ENCODE measurements at regions of chr10 and their contacts with region 1.

Region 1: GRCh38 chr10:90751107-90751997 is 106.5 kb downstream of the HTR7 start:
- DNase-seq: peak; percentile 76
- ATAC-seq: peak; percentile 99
- H3K4me3 Mint-ChIP-seq: no peak overlapping the region
- H3K27ac Mint-ChIP-seq: no peak overlapping the region
- H3K4me1 Mint-ChIP-seq: peaks cover 13% of the 10 kb centered on the region
- H3K27me3 Mint-ChIP-seq: no peaks in the 10 kb centered on the region
- CTCF ChIP-seq: peak; percentile 74

Region 2: GRCh38 chr10:90470966-90471365 is 280.4 kb before region 1 on chr10:
- CTCF ChIA-PET with region 1: no interaction called
- POLR2A ChIA-PET with region 1: no interaction called
- DNase-seq: no peak
- ATAC-seq: no peak; the same call in 1 of the 2 replicates
- H3K4me3 Mint-ChIP-seq: no peak overlapping the region
- H3K27ac Mint-ChIP-seq: peak overlapping the region; percentile 26
- H3K4me1 Mint-ChIP-seq: peaks cover 27% of the 10 kb centered on the region
- H3K27me3 Mint-ChIP-seq: no peaks in the 10 kb centered on the region; the same call in 1 of the 2 replicates
- CTCF ChIP-seq: no peak

Region 3: DNA sequence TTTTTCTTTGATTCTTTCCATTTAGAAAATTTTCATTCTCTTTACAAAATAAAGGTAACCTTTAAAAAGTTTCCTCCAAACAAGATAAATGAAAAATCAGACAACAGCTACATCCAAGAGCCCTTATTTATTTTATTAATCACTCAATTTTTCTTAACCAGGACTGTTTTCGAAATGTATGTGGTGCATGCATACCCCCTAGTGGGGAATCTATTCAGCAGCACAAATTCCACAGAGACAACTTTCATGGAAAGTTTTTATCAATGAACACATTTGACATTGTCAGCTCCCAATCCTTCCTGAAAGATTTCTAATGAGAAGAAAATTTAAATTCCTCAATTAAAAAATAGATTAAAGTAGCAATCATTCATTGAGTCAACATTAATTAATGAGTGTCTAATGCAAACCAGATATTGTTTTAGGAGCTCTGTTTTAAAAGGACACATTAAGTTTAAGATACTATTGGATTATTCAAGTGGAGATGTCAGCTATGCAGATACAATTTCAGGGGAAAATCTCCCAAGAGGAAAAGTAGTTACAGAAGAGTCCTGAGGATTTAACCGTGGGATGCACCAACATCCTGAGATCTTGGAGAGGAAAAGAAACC is 111.7 kb after region 1 on chr10:
- CTCF ChIA-PET with region 1: interaction called, 11 read pairs
- POLR2A ChIA-PET with region 1: no interaction called
- DNase-seq: no peak
- ATAC-seq: no peak
- H3K4me3 Mint-ChIP-seq: no peak overlapping the region
- H3K27ac Mint-ChIP-seq: no peak overlapping the region
- H3K4me1 Mint-ChIP-seq: peaks cover 18% of the 10 kb centered on the region
- H3K27me3 Mint-ChIP-seq: peaks cover 26% of the 10 kb centered on the region
- CTCF ChIP-seq: no peak

Region 4: DNA sequence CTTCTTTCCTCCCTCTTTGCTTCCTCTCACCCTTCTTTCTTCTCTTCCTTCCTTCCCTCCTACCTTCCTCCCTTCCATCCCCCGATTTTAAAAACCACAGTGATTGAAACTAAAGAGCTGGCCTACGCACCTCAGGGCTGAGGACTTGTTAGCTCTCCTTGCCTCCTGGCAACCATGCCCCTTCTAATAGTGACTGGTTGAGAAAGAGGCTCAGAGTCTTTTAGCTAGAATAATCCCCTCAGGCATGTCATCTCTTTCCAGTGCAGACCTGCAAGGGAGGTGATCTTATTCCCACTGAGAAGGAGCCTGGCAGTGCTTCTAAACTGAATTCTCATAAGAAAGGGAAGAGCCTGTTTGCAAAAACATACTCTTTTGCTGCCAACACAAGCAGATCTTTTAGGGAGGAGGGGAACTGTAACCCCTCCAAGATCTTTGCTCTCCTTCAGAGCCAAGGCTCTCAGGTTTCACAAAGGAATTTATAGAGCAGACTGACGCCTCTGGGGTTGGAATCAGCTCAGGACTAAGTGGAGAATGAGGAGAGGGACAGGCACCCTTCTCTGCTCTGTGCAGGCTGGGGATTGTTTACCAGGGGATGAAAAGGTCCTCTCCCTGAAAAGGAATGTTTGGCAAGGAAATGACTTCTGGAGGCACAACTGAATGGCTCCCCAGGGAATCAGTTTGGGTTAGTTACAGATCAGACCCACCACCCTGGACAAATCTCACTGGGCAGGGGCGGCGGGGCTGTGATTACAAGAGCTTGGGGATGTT is 178.9 kb after region 1 on chr10:
- CTCF ChIA-PET with region 1: no interaction called
- POLR2A ChIA-PET with region 1: no interaction called
- DNase-seq: no peak
- ATAC-seq: peak; percentile 79
- H3K4me3 Mint-ChIP-seq: peak overlapping the region; percentile 46
- H3K27ac Mint-ChIP-seq: no peak overlapping the region; the same call in 1 of the 2 replicates
- H3K4me1 Mint-ChIP-seq: peaks cover 36% of the 10 kb centered on the region
- H3K27me3 Mint-ChIP-seq: peaks cover 100% of the 10 kb centered on the region
- CTCF ChIP-seq: no peak